HEK293T (cell line): ENCODE measurements at regions of chr21 and their contacts with region 1.

Region 1: GRCh38 chr21:39388038-39388810 is 39.3 kb upstream of the HMGN1 start:
- DNase-seq: peak; percentile 92

Region 2: DNA sequence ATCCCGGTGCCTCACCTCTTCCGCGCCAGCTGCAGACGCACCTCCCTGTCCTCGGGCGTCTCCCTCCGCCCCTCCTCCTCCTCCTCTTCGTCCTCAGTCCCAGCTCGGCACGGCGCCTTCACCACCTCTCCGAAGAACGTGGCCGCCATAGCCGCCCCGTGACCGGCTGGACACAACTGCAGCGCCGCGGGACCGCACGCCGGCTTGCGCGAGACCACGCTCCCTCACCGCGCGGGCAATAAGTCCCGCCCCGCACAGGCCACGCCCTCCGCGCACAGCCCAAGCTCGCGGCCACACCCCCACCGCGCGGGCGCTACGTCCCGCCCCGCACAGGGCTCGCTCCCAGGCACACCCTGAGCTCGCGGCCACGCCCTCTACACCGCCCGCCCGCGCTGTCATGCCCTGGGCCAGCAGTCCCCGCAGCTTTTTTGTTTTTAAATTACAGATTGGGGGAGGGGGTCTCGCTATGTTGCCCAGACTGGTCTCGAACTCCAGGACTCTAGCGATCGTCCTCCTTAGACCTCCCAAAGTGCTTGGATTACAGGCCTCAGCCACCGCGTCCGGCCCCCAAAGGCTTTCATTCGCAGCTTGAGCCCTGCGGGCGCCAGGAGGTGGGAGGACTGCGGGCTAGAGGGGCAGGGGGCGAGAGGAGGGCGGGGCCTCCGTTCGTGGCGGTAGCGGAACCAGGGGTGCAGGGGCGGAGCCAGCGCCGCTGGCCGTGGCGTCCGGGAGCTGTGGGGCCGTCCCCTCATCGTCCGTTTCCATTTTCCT is 204.8 kb before region 1 on chr21 and contains the start of gene PSMG1:
- CTCF ChIA-PET with region 1: no interaction called
- POLR2A ChIA-PET with region 1: interaction called, 20 read pairs
- DNase-seq: peak; percentile 95

Region 3: DNA sequence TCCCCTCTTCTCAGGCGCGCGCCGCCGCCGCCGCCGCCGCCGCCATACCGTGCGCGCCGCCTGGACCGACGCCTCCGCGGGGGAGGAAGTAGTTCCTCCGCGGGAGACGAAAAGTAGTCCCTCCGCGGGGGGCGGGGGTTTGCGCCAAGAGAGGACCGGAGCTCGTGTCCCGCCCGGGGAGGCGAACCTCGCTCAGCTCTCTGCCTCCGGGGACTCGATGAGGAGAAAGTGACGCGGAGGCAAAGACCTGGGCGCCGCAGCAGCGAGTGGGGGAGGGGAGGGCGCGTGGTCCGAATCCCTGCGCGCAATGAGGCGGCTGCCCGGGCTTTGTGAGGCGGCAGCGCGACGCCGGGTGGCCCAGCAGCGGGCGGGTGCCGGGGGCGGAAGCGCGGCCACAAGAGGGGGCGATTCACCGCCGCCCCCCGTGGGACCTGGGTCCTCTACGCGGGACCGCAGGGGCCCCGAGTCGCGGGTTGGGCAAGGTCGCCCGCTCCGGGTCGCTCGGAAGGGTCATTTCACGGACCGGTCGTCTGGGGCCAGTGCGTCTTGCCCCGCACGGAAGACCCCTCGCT is 74.6 kb before region 1 on chr21 and contains the start of gene BRWD1:
- CTCF ChIA-PET with region 1: no interaction called
- POLR2A ChIA-PET with region 1: interaction called, 23 read pairs
- DNase-seq: peak; percentile 78

Region 4: GRCh38 chr21:39373644-39374043 is 14.6 kb before region 1 on chr21:
- CTCF ChIA-PET with region 1: interaction called, 4 read pairs
- POLR2A ChIA-PET with region 1: interaction called, 17 read pairs
- DNase-seq: peak; percentile 67

Region 5: GRCh38 chr21:39467746-39468145 is 79.5 kb after region 1 on chr21:
- CTCF ChIA-PET with region 1: no interaction called
- POLR2A ChIA-PET with region 1: no interaction called
- DNase-seq: no peak

Region 6: GRCh38 chr21:39518138-39518846 is 130.1 kb after region 1 on chr21:
- CTCF ChIA-PET with region 1: no interaction called
- POLR2A ChIA-PET with region 1: no interaction called
- DNase-seq: peak; percentile 86